SK-N-SH (cell line): ENCODE measurements at regions of chr22 and their contacts with region 1.

Region 1: DNA sequence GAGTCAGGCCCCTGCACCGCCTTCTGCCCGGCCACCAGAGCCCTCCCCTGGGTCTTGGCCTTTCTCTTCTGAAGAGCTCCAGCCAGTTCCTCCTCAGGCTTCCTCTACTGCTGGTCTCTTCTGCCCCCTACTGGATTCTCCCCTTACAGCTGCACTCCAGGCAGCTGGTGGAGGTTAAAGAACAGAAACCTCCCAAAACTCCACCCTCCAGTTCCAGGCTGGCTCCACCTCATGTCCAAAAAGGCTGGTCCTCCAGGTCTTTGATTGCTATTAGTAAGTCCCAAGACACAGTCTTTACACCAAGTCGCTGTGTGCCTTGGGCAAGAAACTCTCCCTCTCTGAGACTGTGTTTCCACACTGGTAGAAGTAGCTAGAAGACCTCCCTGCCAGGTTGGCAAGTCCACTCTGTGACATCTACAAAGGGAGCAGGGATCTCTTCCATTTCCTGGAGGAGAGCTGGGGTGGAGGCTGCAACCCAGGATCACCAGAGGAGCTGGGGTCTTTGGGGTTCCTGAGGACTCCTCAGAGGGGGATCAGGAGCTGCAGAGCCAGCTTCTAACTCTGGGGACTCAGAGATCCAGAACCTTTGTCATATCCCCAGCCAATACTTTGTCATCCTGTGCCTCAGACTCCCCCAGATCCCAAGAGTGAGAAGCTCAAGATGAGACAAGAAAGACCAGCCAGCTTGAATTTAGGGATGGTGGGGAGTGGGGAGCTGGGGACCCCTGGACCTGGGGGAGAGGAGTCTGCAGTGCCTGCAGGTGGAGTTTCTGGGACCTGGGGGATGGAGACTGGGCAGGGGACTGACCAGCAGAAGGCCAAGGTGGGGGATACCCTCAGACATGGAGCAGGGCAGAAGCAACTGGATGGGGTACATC is 3.4 kb upstream of the IGLL5 start:
- DNase-seq: peak; percentile 79
- H3K4me3 ChIP-seq: no peak overlapping the region; a peak in 1 of 4 replicates
- H3K27ac ChIP-seq: no peak overlapping the region
- H3K4me1 ChIP-seq: peaks cover 0 to 33% of the 10 kb centered on the region in 2 experiments; a peak in 2 of 4 replicates
- H3K27me3 ChIP-seq: peaks cover 10% of the 10 kb centered on the region
- CTCF ChIP-seq: peak; percentile 59
- EP300 ChIP-seq: no peak
- RAD21 ChIP-seq: peak; percentile 91

Region 2: DNA sequence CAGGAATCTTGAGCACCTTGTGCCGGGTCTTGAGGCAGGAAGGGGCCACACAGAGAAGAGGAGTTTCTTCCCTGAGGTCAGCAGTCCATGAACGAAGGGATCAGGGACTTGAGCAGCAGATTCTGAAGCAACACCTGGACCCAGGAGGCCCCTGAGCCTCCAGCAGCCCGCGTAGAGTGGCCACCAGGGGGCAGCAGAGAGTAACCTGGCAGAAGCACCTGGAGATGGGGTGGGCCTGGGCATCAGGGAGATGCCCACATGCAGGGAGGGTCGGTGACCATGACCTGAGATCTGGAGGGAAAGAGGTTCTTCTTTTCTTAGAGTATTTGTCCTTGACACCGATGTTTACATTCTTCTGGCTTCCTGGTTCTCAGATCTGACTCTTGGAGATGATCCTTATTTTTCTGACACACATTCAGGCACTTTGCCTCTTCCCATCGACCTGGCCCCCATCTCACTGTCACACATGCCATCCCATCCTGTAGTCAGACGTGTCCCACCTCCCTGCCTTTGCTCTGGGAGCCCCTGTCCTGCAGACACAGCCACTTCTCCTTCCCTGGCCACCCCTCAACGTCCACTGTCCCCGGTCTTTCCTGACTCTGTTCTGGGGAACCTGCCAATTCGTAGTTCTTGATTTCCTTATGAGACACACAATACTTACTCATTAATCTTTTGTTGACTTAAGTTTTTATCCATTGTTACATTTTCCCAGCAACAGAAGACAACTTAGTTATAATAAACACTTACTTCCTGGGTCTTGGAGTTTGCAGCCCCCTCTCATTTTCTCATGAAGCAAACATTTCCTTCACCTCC is 173.3 kb before region 1 on chr22:
- CTCF ChIA-PET with region 1: interaction called, 13 read pairs
- POLR2A ChIA-PET with region 1: no interaction called
- DNase-seq: peak; percentile 75
- H3K4me3 ChIP-seq: peak overlapping the region in 1 of 2 experiments; percentile 9; a peak in 1 of 4 replicates
- H3K27ac ChIP-seq: no peak overlapping the region
- H3K4me1 ChIP-seq: no peaks in the 10 kb centered on the region
- H3K27me3 ChIP-seq: no peaks in the 10 kb centered on the region; the same call in 1 of the 2 replicates
- CTCF ChIP-seq: peak; percentile 91
- EP300 ChIP-seq: no peak
- RAD21 ChIP-seq: peak; percentile 36

Region 3: GRCh38 chr22:22761963-22762772 is 122.1 kb before region 1 on chr22:
- CTCF ChIA-PET with region 1: interaction called, 99 read pairs
- POLR2A ChIA-PET with region 1: interaction called, 3 read pairs
- DNase-seq: peak; percentile 44
- H3K4me3 ChIP-seq: no peak overlapping the region
- H3K27ac ChIP-seq: no peak overlapping the region; a peak in 1 of 4 replicates
- H3K4me1 ChIP-seq: peaks cover 0 to 12% of the 10 kb centered on the region in 2 experiments; a peak in 1 of 4 replicates
- H3K27me3 ChIP-seq: no peaks in the 10 kb centered on the region
- CTCF ChIP-seq: no peak
- EP300 ChIP-seq: peak in 1 of 2 experiments; percentile 46; a peak in 1 of 4 replicates
- RAD21 ChIP-seq: no peak

Region 4: GRCh38 chr22:22810018-22810427 is 74.2 kb before region 1 on chr22:
- CTCF ChIA-PET with region 1: interaction called, 25 read pairs
- POLR2A ChIA-PET with region 1: no interaction called
- DNase-seq: peak; percentile 51
- H3K4me3 ChIP-seq: no peak overlapping the region
- H3K27ac ChIP-seq: no peak overlapping the region
- H3K4me1 ChIP-seq: no peaks in the 10 kb centered on the region
- H3K27me3 ChIP-seq: no peaks in the 10 kb centered on the region
- CTCF ChIP-seq: peak; percentile 58
- EP300 ChIP-seq: no peak
- RAD21 ChIP-seq: peak; percentile 34

Region 5: DNA sequence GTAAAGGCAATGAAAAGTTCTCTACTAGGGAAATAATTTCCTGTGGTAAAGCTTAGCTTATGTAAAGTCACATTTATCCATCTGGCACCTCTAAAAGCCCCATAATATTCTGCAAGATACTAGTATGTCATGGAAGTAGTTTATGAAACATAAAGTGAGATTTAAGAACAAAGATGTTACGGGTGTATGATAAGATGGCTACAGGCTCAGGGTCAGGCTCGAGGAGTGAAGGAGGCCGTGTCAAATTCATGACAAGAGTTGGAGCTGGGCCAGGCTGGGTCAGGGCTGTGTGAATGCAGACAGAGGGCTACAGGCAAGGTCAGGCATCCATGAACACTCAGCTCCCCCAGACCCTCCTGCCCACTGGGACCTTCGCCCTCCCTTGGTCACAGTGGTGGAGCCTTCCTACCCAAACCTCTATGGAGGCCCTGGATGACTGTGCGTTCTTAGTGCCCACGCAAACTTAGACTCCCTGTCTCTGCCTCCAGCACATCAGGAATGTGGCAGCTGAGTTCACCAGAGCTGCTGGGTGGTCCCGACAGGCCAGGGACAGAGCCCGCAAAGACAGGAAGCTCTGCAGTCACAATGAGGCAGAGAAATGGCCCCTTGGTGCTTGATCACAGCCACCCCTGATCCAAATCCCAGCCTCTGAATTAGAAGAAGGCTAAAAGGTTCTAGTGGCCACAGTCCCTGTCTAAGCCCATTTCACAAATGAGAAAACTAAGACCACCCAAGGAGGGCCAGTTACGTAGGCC is 18.2 kb after region 1 on chr22:
- CTCF ChIA-PET with region 1: interaction called, 26 read pairs
- POLR2A ChIA-PET with region 1: interaction called, 3 read pairs
- DNase-seq: no peak
- H3K4me3 ChIP-seq: no peak overlapping the region
- H3K27ac ChIP-seq: no peak overlapping the region
- H3K4me1 ChIP-seq: no peaks in the 10 kb centered on the region
- H3K27me3 ChIP-seq: no peaks in the 10 kb centered on the region
- CTCF ChIP-seq: no peak
- EP300 ChIP-seq: no peak
- RAD21 ChIP-seq: no peak